ENCODE measurements at regions of chr7 and their contacts with region 1.

Region 1: GRCh38 chr7:114026486-114027089 is 107.8 kb upstream of the PPP1R3A start:
- DNase-seq: peak; percentile 63
- ATAC-seq: no peak
- H3K4me3 ChIP-seq: no peak overlapping the region
- H3K27ac ChIP-seq: no peak overlapping the region
- H3K4me1 ChIP-seq: no peaks in the 10 kb centered on the region
- H3K27me3 ChIP-seq: no peaks in the 10 kb centered on the region
- CTCF ChIP-seq: peak; percentile 63
- EP300 ChIP-seq: no peak
- POLR2A ChIP-seq: no peak
- RAD21 ChIP-seq: no peak

Region 2: GRCh38 chr7:114085592-114086501 is 59.3 kb after region 1 on chr7:
- CTCF ChIA-PET with region 1: no interaction called
- POLR2A ChIA-PET with region 1: no interaction called
- in situ Hi-C with region 1: no loop called
- intact Hi-C with region 1: no loop called
- DNase-seq: no peak
- ATAC-seq: peak; percentile 51
- H3K4me3 ChIP-seq: peak overlapping the region; percentile 34 to 54 (median 38); a peak in 5 of 6 replicates
- H3K27ac ChIP-seq: no peak overlapping the region
- H3K4me1 ChIP-seq: peaks cover 43% of the 10 kb centered on the region
- H3K27me3 ChIP-seq: peaks cover 1 to 28% of the 10 kb centered on the region in 2 experiments
- CTCF ChIP-seq: no peak
- EP300 ChIP-seq: no peak
- POLR2A ChIP-seq: no peak
- RAD21 ChIP-seq: no peak

Region 3: DNA sequence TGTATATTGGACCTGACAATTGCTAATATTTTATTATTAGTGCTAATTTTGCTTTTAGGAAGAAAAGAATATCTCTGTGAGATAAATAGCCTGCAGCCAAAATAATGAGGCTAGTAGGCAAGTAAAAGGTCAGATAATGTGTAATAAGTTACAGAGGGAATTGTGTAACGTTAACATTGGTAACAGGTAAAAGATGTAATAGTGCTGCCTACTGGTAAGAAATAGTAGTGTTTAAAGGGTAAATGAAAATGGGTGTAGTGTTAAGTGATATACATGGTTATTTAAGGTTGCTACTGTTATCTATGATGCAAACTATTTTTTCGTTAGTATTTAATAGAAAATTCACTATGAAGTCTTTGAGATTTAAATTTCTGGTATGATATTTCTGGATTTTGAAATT is 378.8 kb after region 1 on chr7:
- CTCF ChIA-PET with region 1: no interaction called
- POLR2A ChIA-PET with region 1: no interaction called
- in situ Hi-C with region 1: no loop called
- intact Hi-C with region 1: loop called (anchors 1 kb)
- DNase-seq: peak; percentile 30
- ATAC-seq: peak; percentile 86
- H3K4me3 ChIP-seq: no peak overlapping the region
- H3K27ac ChIP-seq: no peak overlapping the region
- H3K4me1 ChIP-seq: no peaks in the 10 kb centered on the region
- H3K27me3 ChIP-seq: no peaks in the 10 kb centered on the region
- CTCF ChIP-seq: peak; percentile 53
- EP300 ChIP-seq: no peak
- POLR2A ChIP-seq: no peak
- RAD21 ChIP-seq: no peak

Region 4: DNA sequence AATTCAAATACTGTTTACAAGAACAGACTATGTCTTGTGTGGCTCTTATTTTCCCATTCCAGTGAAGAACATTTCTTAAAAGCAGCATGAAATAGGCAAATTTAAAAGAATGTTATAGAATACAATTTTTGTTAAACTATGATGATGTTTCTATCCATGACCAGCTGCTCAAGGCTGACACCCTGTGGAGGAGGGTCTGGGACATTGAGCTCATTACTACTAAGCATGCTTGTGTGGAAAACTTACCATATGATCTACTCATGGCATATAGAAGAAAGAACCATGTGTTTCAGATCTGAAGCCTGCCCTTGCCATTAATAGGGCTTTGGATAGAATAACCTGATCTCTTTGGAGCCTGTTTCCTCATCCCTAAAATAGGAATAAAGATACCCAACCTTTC is 513.0 kb after region 1 on chr7:
- CTCF ChIA-PET with region 1: no interaction called
- POLR2A ChIA-PET with region 1: no interaction called
- in situ Hi-C with region 1: no loop called
- intact Hi-C with region 1: loop called (anchors 2 kb)
- DNase-seq: peak; percentile 12
- ATAC-seq: peak; percentile 60
- H3K4me3 ChIP-seq: no peak overlapping the region
- H3K27ac ChIP-seq: no peak overlapping the region
- H3K4me1 ChIP-seq: no peaks in the 10 kb centered on the region
- H3K27me3 ChIP-seq: no peaks in the 10 kb centered on the region
- CTCF ChIP-seq: peak; percentile 41
- EP300 ChIP-seq: no peak
- POLR2A ChIP-seq: no peak
- RAD21 ChIP-seq: no peak

Region 5: GRCh38 chr7:114663502-114663901 is 636.9 kb after region 1 on chr7:
- CTCF ChIA-PET with region 1: no interaction called
- POLR2A ChIA-PET with region 1: no interaction called
- in situ Hi-C with region 1: no loop called
- intact Hi-C with region 1: loop called (anchors 2 kb)
- DNase-seq: peak; percentile 3
- ATAC-seq: no peak
- H3K4me3 ChIP-seq: no peak overlapping the region
- H3K27ac ChIP-seq: no peak overlapping the region
- H3K4me1 ChIP-seq: peaks cover 8% of the 10 kb centered on the region; the same call in 1 of the 2 replicates
- H3K27me3 ChIP-seq: no peaks in the 10 kb centered on the region
- CTCF ChIP-seq: peak; percentile 27; the same call in 1 of the 2 replicates
- EP300 ChIP-seq: no peak
- POLR2A ChIP-seq: no peak
- RAD21 ChIP-seq: no peak

Region 6: DNA sequence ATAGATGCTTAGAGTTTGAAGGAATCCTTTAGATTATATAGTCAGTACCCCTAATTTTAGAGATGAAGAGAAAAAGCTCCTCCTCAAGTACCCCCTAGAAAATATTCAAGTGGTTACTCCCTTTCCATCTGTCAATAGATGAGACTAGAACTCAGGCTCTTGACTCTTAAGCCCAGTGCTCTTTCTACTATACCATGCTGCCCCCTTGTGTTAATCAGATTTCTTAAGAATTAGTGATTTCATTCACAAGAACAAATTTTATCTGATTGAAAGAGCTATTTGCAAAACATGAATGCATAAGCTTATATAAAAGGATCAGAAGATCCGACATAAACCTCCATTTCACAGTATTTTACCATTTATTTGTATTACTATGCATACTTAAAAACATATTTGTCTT is 1824.7 kb after region 1 on chr7:
- CTCF ChIA-PET with region 1: interaction called, 3 read pairs
- POLR2A ChIA-PET with region 1: no interaction called
- in situ Hi-C with region 1: no loop called
- intact Hi-C with region 1: loop called (anchors 1 kb)
- DNase-seq: peak; percentile 24
- ATAC-seq: no peak
- H3K4me3 ChIP-seq: no peak overlapping the region
- H3K27ac ChIP-seq: no peak overlapping the region
- H3K4me1 ChIP-seq: no peaks in the 10 kb centered on the region
- H3K27me3 ChIP-seq: no peaks in the 10 kb centered on the region; a peak in 1 of 5 replicates
- CTCF ChIP-seq: peak; percentile 26; the same call in 1 of the 2 replicates
- EP300 ChIP-seq: no peak
- POLR2A ChIP-seq: no peak
- RAD21 ChIP-seq: no peak

Measured in HepG2 (cell line).